ENCODE measurements at regions of chr12 and their contacts with region 1.

Region 1: GRCh38 chr12:98516184-98516873 is 939 bp downstream of the TMPO start:
- DNase-seq: peak; percentile 98
- H3K4me3 ChIP-seq: peak overlapping the region; percentile 77
- H3K27ac ChIP-seq: peak overlapping the region; percentile 99
- H3K4me1 ChIP-seq: peaks cover 37% of the 10 kb centered on the region
- CTCF ChIP-seq: peak; percentile 86

Region 2: DNA sequence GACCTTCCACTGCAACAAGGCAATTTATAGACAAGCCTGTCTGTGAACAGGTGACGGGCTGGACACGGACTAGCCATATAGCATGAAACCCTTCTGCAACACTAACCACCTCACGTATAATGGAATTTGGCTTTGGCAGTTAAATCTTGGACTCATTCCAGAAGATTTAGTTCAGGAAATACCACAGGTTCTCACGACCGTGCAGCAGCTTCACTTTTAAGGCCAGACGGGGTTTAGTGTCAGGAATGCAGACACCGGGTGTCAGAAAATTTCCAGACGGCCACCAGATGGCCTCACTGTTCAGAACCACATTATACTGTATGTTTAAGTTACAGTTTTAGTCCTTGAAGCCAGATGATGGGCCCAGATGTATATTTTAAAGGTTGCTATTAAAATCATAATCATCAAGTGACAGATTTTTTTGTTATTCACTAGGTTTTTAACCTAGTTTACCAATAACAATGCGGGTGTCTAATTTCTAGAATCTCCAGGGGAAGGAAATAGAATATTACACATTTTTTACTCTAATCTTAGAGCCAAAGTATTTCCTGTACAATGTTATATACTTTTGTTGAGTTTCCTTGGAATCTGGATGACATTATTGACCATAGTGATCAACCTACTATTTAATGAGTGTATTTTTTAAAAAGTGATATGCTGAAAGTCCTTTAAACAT is 91.5 kb before region 1 on chr12:
- CTCF ChIA-PET with region 1: no interaction called
- POLR2A ChIA-PET with region 1: no interaction called
- intact Hi-C with region 1: loop called (anchors 2 kb)
- DNase-seq: peak; percentile 63
- H3K4me3 ChIP-seq: no peak overlapping the region
- H3K27ac ChIP-seq: no peak overlapping the region
- H3K4me1 ChIP-seq: no peaks in the 10 kb centered on the region
- CTCF ChIP-seq: peak; percentile 91

Region 3: GRCh38 chr12:98503592-98504367 is 12.5 kb before region 1 on chr12:
- CTCF ChIA-PET with region 1: no interaction called
- POLR2A ChIA-PET with region 1: interaction called, 42 read pairs
- intact Hi-C with region 1: loop called (anchors 1 kb)
- DNase-seq: peak; percentile 96
- H3K4me3 ChIP-seq: peak overlapping the region; percentile 69
- H3K27ac ChIP-seq: peak overlapping the region; percentile 95
- H3K4me1 ChIP-seq: peaks cover 17% of the 10 kb centered on the region
- CTCF ChIP-seq: 0 out of 2 replicates have a peak, but pooled peaks have one; percentile 20

Region 4: DNA sequence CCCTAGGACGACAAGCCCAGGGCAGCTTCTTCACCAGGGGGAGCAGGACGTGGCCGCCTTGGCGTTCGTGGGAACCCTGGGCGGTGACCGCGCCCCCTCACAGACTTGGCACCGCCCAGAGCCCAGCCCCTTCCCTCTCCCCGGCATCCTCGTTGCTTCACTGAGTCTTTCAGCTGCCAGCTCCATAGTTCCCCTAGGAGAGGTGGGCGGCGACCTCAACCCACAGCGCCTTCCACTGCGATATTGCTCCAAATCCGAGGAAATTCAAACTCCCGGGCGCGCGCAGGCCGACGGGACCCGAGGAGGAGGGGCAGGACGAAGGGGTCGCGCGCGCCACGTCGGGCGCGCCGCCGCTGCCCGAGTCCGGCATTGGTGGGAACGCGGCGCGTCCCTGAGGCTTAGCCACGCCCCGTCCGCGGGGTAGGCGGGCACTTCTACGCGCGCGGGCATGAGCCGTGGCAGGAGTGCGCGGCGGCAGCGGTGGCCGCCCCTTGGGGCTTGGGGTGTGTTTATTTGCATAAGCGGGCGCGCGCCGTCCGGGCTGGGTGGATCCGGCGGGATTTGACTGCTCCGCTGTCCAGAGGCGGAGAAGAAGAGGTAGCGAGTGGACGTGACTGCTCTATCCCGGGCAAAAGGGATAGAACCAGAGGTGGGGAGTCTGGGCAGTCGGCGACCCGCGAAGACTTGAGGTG is 128.5 kb after region 1 on chr12 and contains the starts of genes APAF1 and IKBIP:
- CTCF ChIA-PET with region 1: no interaction called
- POLR2A ChIA-PET with region 1: interaction called, 8 read pairs
- intact Hi-C with region 1: loop called (anchors 2 kb)
- DNase-seq: peak; percentile 97
- H3K4me3 ChIP-seq: peak within 1 kb of the TSS; percentile 93
- H3K27ac ChIP-seq: peak within 1 kb of the TSS; percentile 87
- H3K4me1 ChIP-seq: peaks cover 31% of the 10 kb centered on the region
- CTCF ChIP-seq: no peak
- total RNA-seq, gene APAF1: 14.7 and 16.0 TPM in 2 replicates
- total RNA-seq, gene IKBIP: 18.3 and 25.1 TPM in 2 replicates

Region 5: GRCh38 chr12:99600388-99600787 is 1084.1 kb after region 1 on chr12:
- CTCF ChIA-PET with region 1: no interaction called
- POLR2A ChIA-PET with region 1: no interaction called
- intact Hi-C with region 1: loop called (anchors 10 kb)
- DNase-seq: peak; percentile 99
- H3K4me3 ChIP-seq: peak overlapping the region; percentile 41
- H3K27ac ChIP-seq: peak overlapping the region; percentile 99
- H3K4me1 ChIP-seq: peaks cover 49% of the 10 kb centered on the region
- CTCF ChIP-seq: no peak

Measured in OCI-LY7 (cell line).